Dendritic cell treated with granulocyte-macrophage colony-stimulating factor and Interleukin-4, amounts not matched to agents 40 ng/mL and 50 ng/mL, for 4 days (primary cell): ENCODE measurements at regions of chr6 and their contacts with region 1.

Region 1: GRCh38 chr6:53581173-53581773 is 36.4 kb upstream of the GCLC start:
- H3K4me3 Mint-ChIP-seq: no peak overlapping the region
- H3K27ac Mint-ChIP-seq: peak overlapping the region; percentile 53
- H3K4me1 Mint-ChIP-seq: peaks cover 44% of the 10 kb centered on the region
- H3K27me3 Mint-ChIP-seq: no peaks in the 10 kb centered on the region

Region 2: GRCh38 chr6:52125139-52125538 is 1456.1 kb before region 1 on chr6:
- intact Hi-C with region 1: no loop called
- H3K4me3 Mint-ChIP-seq: no peak overlapping the region
- H3K27ac Mint-ChIP-seq: no peak overlapping the region
- H3K4me1 Mint-ChIP-seq: no peaks in the 10 kb centered on the region
- H3K27me3 Mint-ChIP-seq: no peaks in the 10 kb centered on the region

Region 3: DNA sequence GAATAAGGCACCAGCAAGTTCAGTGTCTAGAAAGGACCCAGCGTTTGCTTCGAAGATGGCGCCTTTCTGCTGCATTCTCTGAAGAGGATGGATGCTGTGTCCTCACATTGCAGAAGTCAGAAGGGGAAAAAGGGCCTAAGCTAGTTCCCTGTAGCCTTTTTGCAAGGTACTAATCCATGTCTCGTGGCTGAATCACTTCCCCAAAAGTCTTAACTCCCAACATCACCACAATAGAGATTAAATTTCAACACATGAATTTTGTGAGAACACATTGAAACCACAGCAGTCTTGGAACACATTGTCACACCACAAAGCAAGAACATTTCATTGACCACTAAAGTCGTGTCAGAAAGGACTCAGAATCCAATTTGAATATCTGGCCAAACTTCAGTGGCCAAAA is 42.2 kb after region 1 on chr6:
- intact Hi-C with region 1: loop called (anchors 5 kb)
- H3K4me3 Mint-ChIP-seq: no peak overlapping the region
- H3K27ac Mint-ChIP-seq: peak overlapping the region; percentile 61
- H3K4me1 Mint-ChIP-seq: peaks cover 33% of the 10 kb centered on the region
- H3K27me3 Mint-ChIP-seq: no peaks in the 10 kb centered on the region

Region 4: DNA sequence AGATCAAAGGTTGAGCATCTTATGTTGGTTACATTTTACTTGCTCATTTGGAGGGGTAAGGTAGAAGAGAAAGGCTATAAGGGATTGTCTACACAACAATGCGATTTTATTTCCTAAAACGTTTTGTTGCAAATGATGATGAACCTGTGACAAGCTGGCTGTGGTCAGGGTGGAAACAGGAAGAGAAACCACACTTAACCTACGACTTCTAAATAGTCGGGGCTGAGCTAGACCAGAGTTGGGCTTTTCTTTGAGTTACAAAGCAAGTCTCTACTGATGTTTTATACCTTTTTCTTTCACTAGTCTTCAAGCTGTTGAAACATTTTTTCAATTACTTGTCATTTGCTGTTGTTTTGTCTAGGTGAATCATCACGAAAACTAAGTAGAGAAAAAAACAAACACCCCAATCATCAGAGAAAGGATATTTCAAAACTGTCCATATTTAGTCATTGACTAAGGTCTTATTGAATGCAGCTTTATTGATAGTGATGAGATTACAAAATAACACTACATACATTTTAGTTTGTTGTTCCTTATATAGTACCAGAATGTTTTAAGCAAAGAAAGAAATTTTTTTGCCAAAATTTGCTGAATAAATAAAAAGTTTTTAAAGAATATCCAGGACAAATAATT is 66.3 kb after region 1 on chr6:
- intact Hi-C with region 1: no loop called
- H3K4me3 Mint-ChIP-seq: no peak overlapping the region
- H3K27ac Mint-ChIP-seq: peak overlapping the region; percentile 58
- H3K4me1 Mint-ChIP-seq: peaks cover 39% of the 10 kb centered on the region
- H3K27me3 Mint-ChIP-seq: peaks cover 13% of the 10 kb centered on the region